ENCODE measurements at regions of chr2 and their contacts with region 1.

Region 1: DNA sequence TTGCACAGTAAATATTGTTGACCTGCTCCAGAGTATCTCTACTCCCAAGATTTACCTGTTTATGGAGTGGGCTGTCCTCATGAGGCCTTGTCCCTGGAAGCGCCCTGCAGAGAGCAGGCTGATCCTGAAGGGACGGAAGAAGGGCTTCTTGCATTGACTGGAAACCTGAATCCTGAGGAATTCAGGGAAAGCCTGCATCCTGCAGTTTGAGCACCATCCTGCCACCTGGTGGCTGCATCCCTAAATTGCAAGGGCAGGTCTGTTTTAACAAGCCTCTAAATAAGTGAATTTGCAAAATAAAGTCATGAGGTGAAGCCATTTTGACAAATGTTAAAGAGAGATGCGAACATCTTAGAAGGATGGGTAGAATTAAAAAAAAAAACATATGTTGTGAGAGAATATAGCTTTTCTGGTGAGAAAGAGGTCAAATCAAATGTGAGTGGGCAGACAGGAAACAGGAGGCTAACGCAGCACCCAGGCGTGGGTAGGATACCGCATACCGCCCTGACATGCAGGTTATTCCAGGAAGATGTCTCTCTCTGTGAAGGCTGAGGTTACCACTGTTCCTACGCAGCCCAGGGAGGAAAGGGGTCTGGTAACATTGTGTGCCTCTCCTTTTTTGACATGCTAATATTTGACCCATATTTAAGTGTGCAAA is 754.9 kb downstream of the RNF144A start:
- DNase-seq: peak; percentile 49
- ATAC-seq: peak; percentile 83
- H3K4me3 ChIP-seq: no peak overlapping the region
- H3K27ac ChIP-seq: no peak overlapping the region
- H3K4me1 ChIP-seq: no peaks in the 10 kb centered on the region
- H3K27me3 ChIP-seq: peaks cover 0 to 5% of the 10 kb centered on the region in 2 experiments; a peak in 1 of 5 replicates
- CTCF ChIP-seq: peak; percentile 85
- EP300 ChIP-seq: no peak
- POLR2A ChIP-seq: no peak
- RAD21 ChIP-seq: peak; percentile 60

Region 2: DNA sequence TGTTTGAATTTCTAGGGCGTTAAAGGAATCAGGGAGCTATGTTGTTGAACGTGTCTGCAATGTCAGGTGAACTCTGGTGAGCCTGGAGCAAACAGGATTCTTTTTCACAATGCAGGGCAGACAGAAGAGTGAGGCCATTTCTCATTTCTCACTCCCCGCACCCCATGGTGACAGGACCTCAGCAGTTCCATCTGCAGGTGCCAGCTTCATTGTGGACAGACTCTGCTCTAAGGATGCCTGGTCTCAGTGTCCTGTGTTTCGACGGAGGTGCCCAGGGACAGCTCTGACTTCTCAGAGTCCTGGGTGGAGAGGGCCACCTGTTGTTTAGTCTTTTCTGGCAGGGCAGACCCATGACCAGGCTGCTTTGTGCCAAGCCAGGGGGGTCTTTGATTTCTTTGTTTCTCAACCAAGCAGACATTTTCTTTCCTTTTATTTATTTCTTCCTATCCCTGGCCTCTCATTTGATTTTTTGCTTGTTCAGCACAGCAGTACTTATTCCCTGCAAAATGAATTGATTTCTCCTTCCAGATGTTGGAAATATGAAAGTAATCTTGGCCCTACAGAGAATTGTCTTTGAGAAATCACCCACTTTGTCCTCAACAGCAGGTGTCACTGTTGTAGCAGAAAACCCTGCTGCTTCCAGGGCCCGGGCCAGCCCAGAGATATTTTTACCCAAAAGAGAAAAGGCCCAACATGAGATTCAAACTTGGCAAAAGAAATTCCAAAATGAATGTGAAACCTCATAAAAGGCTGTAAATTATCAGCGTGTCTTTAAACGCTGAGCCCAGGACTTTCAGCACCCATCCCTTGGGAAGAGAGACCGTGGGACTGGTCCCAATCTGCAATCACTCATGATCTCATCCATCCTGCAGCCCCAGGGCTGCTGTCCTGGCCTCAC is 553.3 kb before region 1 on chr2:
- CTCF ChIA-PET with region 1: interaction called, 3 read pairs
- POLR2A ChIA-PET with region 1: no interaction called
- in situ Hi-C with region 1: loop called (anchors 25 kb)
- intact Hi-C with region 1: loop called (anchors 1 kb)
- DNase-seq: no peak
- ATAC-seq: peak; percentile 87
- H3K4me3 ChIP-seq: no peak overlapping the region
- H3K27ac ChIP-seq: no peak overlapping the region
- H3K4me1 ChIP-seq: no peaks in the 10 kb centered on the region
- H3K27me3 ChIP-seq: no peaks in the 10 kb centered on the region
- CTCF ChIP-seq: peak; percentile 65
- EP300 ChIP-seq: no peak
- POLR2A ChIP-seq: no peak
- RAD21 ChIP-seq: peak; percentile 10; the same call in 1 of the 2 replicates

Region 3: GRCh38 chr2:7427293-7428060 is 244.7 kb before region 1 on chr2:
- CTCF ChIA-PET with region 1: interaction called, 10 read pairs
- POLR2A ChIA-PET with region 1: no interaction called
- in situ Hi-C with region 1: no loop called
- intact Hi-C with region 1: loop called (anchors 1 kb)
- DNase-seq: peak; percentile 53
- ATAC-seq: peak; percentile 56
- H3K4me3 ChIP-seq: no peak overlapping the region
- H3K27ac ChIP-seq: no peak overlapping the region
- H3K4me1 ChIP-seq: no peaks in the 10 kb centered on the region
- H3K27me3 ChIP-seq: peaks cover 0 to 14% of the 10 kb centered on the region in 2 experiments; a peak in 2 of 5 replicates
- CTCF ChIP-seq: peak; percentile 85
- EP300 ChIP-seq: no peak
- POLR2A ChIP-seq: no peak
- RAD21 ChIP-seq: peak; percentile 51; the same call in 1 of the 2 replicates

Region 4: GRCh38 chr2:7620255-7620654 is 51.9 kb before region 1 on chr2:
- CTCF ChIA-PET with region 1: no interaction called
- POLR2A ChIA-PET with region 1: no interaction called
- in situ Hi-C with region 1: no loop called
- intact Hi-C with region 1: no loop called
- DNase-seq: no peak
- ATAC-seq: no peak
- H3K4me3 ChIP-seq: no peak overlapping the region
- H3K27ac ChIP-seq: no peak overlapping the region
- H3K4me1 ChIP-seq: no peaks in the 10 kb centered on the region
- H3K27me3 ChIP-seq: no peaks in the 10 kb centered on the region
- CTCF ChIP-seq: no peak
- EP300 ChIP-seq: no peak
- POLR2A ChIP-seq: no peak
- RAD21 ChIP-seq: no peak

Region 5: DNA sequence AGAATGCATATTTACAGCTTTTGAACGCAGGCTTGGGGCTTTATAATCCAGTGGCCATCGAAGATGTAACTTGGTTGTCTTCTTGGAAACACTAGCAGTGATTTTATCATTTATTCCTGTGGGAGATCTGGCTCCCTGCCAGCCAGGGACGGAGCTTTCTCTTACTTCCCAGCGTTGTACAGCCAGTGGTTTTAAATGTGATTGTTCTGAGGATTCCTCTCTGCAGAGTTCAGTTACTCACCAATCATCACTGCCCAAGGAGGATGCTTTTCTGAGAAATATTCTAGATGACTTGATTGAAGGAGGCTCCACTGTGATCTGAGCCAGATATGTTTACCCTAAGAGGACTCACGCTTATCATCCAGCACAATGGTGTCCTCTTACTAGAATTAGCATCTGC is 10.7 kb before region 1 on chr2:
- CTCF ChIA-PET with region 1: no interaction called
- POLR2A ChIA-PET with region 1: no interaction called
- in situ Hi-C with region 1: no loop called
- intact Hi-C with region 1: no loop called
- DNase-seq: no peak
- ATAC-seq: no peak
- H3K4me3 ChIP-seq: no peak overlapping the region
- H3K27ac ChIP-seq: no peak overlapping the region
- H3K4me1 ChIP-seq: no peaks in the 10 kb centered on the region
- H3K27me3 ChIP-seq: no peaks in the 10 kb centered on the region
- CTCF ChIP-seq: no peak
- EP300 ChIP-seq: no peak
- POLR2A ChIP-seq: no peak
- RAD21 ChIP-seq: no peak

Region 6: GRCh38 chr2:7984693-7985353 is 312.7 kb after region 1 on chr2:
- CTCF ChIA-PET with region 1: no interaction called
- POLR2A ChIA-PET with region 1: no interaction called
- in situ Hi-C with region 1: no loop called
- intact Hi-C with region 1: no loop called
- DNase-seq: no peak
- ATAC-seq: no peak
- H3K4me3 ChIP-seq: no peak overlapping the region
- H3K27ac ChIP-seq: no peak overlapping the region
- H3K4me1 ChIP-seq: no peaks in the 10 kb centered on the region
- H3K27me3 ChIP-seq: no peaks in the 10 kb centered on the region
- CTCF ChIP-seq: no peak
- EP300 ChIP-seq: no peak
- POLR2A ChIP-seq: no peak
- RAD21 ChIP-seq: no peak

Region 7: DNA sequence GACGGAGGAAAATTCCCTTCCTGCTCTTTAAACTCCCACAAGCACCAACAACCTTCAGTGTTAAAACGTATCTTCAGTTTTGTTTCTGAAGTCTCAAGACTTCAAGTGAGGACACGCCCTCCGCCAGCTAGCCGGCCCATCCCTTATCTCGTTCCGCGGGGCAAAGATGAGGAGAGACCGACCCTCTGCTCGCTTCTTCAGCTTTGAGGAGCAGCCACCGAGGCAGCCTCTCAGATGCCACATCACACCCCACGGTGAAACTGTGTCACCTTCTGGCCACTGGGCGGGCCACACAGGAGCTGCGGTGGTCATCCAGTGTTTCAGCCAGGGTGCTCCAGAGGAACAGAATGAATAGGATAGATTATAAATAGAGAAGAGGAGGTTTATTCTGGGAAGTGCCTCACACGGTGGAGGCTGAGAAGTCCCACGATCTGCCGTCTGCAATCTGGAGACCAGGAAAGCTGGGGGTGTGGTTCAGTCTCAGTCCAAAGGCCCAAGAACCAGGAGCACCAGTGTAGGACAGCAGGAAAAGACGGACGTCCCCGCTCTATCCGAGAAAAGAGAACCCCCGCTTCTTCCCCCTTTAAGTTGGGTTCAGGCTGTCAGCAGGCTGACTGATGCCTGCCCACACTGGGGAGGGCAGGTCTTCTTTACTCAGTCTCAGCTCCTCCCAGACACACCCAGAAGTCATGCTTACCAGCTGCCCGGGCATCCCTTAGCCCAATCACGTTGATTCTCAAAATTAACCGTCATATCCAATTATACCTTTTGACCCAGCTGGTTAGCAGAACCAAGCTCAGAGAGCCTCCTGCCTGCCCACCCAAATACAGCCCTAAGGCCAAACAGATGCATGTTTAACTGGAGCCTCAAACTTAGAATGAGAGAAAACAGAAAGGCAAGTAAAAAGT is 610.0 kb after region 1 on chr2:
- CTCF ChIA-PET with region 1: no interaction called
- POLR2A ChIA-PET with region 1: no interaction called
- in situ Hi-C with region 1: no loop called
- intact Hi-C with region 1: loop called (anchors 1 kb)
- DNase-seq: no peak
- ATAC-seq: no peak
- H3K4me3 ChIP-seq: no peak overlapping the region
- H3K27ac ChIP-seq: no peak overlapping the region
- H3K4me1 ChIP-seq: peaks cover 9% of the 10 kb centered on the region
- H3K27me3 ChIP-seq: peaks cover 0 to 21% of the 10 kb centered on the region in 2 experiments; a peak in 4 of 5 replicates
- CTCF ChIP-seq: no peak
- EP300 ChIP-seq: no peak
- POLR2A ChIP-seq: no peak
- RAD21 ChIP-seq: no peak